MCF 10A (cell line): ENCODE measurements at regions of chr20 and their contacts with region 1.

Region 1: DNA sequence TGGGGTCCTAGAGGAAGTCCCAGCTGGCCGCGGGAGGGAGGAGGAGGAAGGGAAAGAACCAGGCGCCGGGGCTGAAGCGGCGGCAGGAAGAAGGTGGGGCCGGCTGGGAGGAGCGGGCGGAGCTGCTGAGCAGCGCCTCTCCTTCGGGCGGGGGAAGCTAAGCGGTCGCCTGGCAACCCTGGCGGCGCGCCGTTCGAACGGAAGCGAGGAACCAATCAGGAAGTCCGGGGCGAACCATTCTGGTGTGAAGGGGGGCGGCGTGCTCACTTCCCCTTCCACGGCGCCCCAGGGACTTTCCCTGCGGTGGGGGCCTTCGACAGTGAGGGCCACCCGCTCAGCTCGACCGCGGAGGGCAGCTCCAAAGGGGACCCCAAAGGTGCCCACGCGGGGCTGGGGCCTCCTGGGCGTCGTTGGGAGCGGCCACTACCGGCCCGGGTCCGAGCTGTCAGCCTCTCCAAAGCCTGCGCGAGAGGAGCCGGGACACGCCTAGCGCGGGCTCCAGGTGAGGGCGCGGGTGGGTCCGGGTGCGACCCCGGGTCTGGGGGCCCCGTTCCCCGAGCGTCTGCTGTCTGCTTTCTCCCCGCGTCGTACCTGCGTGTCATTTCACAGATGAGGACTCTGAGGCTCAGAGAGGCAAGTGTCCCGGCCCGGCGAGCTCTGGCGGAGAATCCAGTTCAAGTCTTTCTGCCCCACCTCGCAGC is at the start of gene FAM110A:
- DNase-seq: peak; percentile 95
- H3K4me3 Mint-ChIP-seq: peak within 1 kb of the TSS; percentile 88
- H3K27ac Mint-ChIP-seq: peak within 1 kb of the TSS; percentile 79
- H3K4me1 Mint-ChIP-seq: peaks cover 23% of the 10 kb centered on the region
- H3K27me3 Mint-ChIP-seq: no peaks in the 10 kb centered on the region
- CTCF ChIP-seq: no peak
- total RNA-seq, gene FAM110A: 9.2 and 13.6 TPM in 2 replicates

Region 2: GRCh38 chr20:844473-845225 is 11.0 kb after region 1 on chr20:
- CTCF ChIA-PET with region 1: interaction called, 3 read pairs
- POLR2A ChIA-PET with region 1: interaction called, 57 read pairs
- intact Hi-C with region 1: no loop called
- DNase-seq: peak; percentile 90
- H3K4me3 Mint-ChIP-seq: peak overlapping the region; percentile 59
- H3K27ac Mint-ChIP-seq: peak overlapping the region; percentile 23
- H3K4me1 Mint-ChIP-seq: peaks cover 15% of the 10 kb centered on the region
- H3K27me3 Mint-ChIP-seq: no peaks in the 10 kb centered on the region
- CTCF ChIP-seq: no peak

Region 3: GRCh38 chr20:884983-885952 is 51.7 kb after region 1 on chr20:
- CTCF ChIA-PET with region 1: interaction called, 4 read pairs
- POLR2A ChIA-PET with region 1: interaction called, 5 read pairs
- intact Hi-C with region 1: loop called (anchors 5 kb)
- DNase-seq: no peak
- H3K4me3 Mint-ChIP-seq: no peak overlapping the region
- H3K27ac Mint-ChIP-seq: no peak overlapping the region
- H3K4me1 Mint-ChIP-seq: peaks cover 37% of the 10 kb centered on the region
- H3K27me3 Mint-ChIP-seq: no peaks in the 10 kb centered on the region
- CTCF ChIP-seq: no peak